ENCODE measurements at regions of chr11 and their contacts with region 1.

Region 1: DNA sequence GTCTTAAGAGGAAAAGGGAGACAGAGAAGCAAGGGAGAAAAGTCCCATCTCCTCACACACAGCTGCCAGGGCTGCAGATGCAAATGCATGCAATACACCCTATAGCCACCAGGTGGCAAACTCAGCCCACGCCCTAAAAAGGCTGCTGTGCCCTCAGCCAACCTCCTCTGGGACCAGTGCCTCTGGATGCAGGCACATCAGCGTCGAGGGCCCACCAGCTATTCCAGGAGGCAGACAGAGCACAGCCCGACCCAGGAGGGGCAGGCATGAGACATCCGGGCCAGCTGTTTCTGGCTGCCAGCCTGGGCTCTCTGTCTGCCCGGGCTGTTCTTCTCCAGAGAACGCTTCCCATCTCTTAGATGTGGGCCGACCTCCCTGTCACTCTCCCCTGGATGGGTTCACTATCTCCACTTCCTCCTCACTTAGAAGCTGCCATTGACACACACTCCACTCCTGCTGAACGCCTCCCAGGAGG is 39.7 kb downstream of the TPBGL start:
- DNase-seq: peak; percentile 65 to 96 (median 88)

Region 2: DNA sequence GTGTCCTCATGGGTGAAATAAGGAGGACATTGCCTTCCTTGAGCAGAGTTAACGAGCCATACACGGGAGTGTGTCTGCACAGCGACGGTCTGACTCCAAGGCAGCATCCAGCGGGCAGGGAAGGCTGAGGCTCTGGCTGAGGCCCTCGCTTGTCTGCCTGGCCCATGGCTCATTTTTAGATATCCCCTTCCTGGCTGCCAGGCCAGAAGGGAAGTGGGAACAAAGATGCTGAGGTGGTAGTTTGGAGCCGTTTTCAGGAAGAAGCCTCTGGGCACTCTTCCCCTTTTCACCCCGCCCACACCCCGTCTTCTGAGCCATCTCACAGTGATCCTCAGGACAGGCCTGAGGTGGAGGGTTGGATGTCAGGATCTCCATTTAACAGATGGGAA is 132.4 kb before region 1 on chr11:
- intact Hi-C with region 1: no loop called
- DNase-seq: peak in 30 of 42 donors; percentile 6 to 66 (median 38)

Region 3: DNA sequence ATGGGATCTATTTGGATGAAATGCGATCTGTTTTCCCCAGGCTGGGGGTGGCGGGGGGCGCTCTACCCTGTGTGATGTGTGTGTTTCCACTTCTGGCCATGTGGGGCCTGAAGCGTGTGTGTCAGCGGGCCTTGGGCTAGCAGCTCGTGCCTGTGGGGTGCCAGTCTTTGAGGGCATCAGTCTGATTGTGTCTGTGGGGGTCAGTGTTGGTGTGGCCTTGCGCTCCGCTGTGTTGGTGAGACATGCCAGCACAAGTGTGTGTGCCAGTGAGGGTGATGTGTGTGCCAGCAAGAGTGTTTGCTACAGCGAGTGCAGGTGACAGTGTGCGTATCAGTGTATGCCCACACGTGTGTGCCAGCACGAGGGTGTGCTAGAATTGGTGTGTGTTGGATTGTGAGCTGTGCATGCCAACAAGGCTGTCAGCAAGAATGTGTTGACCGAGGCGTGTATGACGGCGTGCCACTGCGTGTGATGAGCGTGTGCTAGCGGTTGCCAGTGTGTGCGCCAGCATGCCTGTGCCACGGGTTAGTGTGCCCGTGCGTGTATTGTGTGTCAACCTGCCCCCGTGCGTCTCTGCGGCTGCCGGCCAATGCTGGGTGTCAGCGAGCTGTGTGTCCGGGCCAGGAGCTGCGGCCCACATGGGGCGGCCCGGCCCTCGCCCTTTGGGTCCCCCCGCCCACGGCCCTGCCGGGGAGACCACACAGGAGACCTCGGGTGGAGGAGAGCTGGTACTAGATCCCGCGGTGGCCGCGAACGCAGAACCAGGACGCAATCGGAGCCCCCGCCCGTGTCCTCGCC is 70.7 kb after region 1 on chr11:
- intact Hi-C with region 1: no loop called
- DNase-seq: peak in 32 of 42 donors; percentile 28 to 74 (median 56)

Region 4: GRCh38 chr11:75388386-75389275 is 108.4 kb after region 1 on chr11:
- intact Hi-C with region 1: loop called (anchors 2 kb)
- DNase-seq: peak in 41 of 42 donors; percentile 12 to 88 (median 71)